IMR-90 (cell line): ENCODE measurements at regions of chr16 and their contacts with region 1.

Region 1: GRCh38 chr16:30445408-30446202 is at the start of gene SEPHS2:
- DNase-seq: peak; percentile 97
- ATAC-seq: peak; percentile 97
- H3K4me3 ChIP-seq: peak within 1 kb of the TSS; percentile 65
- H3K27ac ChIP-seq: peak within 1 kb of the TSS; percentile 61
- H3K4me1 ChIP-seq: peaks cover 5% of the 10 kb centered on the region
- H3K27me3 ChIP-seq: no peaks in the 10 kb centered on the region
- CTCF ChIP-seq: peak; percentile 57
- POLR2A ChIP-seq: peak; percentile 95
- RAD21 ChIP-seq: peak; percentile 35
- total RNA-seq, gene SEPHS2: 10.4 and 10.6 TPM in 2 replicates

Region 2: DNA sequence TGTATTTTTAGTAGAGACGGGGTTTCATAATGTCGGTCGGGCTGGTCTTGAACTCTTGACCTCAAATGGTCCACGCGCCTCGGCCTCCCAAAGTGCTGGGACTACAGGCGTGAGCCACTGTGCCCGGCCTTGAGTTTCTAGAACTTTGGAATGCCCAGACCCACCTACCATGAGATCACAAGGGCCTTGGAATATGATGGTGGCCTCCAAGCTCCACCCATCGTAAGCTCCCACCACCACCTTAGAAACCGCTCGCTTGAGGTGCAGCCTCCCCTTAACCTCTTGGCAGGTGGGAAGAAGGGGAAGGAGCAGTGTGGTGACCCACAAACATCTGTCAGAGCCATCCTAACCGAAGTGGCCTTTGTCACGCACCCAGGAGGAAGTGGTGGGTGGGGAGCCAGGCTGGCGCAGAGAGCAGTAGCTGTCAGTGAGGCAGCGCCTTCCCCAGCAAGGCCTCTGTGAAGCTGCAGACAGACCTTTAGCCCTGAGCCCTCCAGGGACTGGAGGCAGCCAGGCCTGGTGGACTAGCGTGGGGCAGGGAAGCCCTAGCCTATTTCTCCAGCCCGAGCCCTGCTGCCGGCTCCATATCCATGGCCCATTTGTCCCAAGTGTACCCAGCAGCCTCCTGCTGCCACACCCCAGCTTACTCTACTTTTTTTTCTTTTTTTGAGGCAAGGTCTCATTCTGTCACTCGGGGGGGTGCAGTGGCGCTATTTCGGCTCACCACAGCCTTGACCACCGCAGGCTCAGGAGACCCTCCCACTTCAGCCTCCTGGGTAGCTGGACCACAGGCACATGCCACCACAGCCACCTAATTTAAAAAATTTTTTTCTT is 13.2 kb after region 1 on chr16:
- CTCF ChIA-PET with region 1: no interaction called
- POLR2A ChIA-PET with region 1: no interaction called
- dilution Hi-C with region 1: no loop called
- in situ Hi-C with region 1: no loop called
- intact Hi-C with region 1: no loop called
- DNase-seq: no peak
- ATAC-seq: no peak
- H3K4me3 ChIP-seq: no peak overlapping the region
- H3K27ac ChIP-seq: no peak overlapping the region
- H3K4me1 ChIP-seq: no peaks in the 10 kb centered on the region
- H3K27me3 ChIP-seq: peaks cover 24% of the 10 kb centered on the region
- CTCF ChIP-seq: no peak
- POLR2A ChIP-seq: no peak
- RAD21 ChIP-seq: no peak

Region 3: GRCh38 chr16:30526823-30527635 is 81.4 kb after region 1 on chr16:
- CTCF ChIA-PET with region 1: no interaction called
- POLR2A ChIA-PET with region 1: no interaction called
- dilution Hi-C with region 1: no loop called
- in situ Hi-C with region 1: no loop called
- intact Hi-C with region 1: loop called (anchors 2 kb)
- DNase-seq: peak; percentile 96
- ATAC-seq: peak; percentile 91
- H3K4me3 ChIP-seq: peak overlapping the region; percentile 85
- H3K27ac ChIP-seq: peak overlapping the region; percentile 97
- H3K4me1 ChIP-seq: peaks cover 5% of the 10 kb centered on the region
- H3K27me3 ChIP-seq: no peaks in the 10 kb centered on the region
- CTCF ChIP-seq: peak; percentile 14; the same call in 1 of the 2 replicates
- POLR2A ChIP-seq: peak; percentile 43; the same call in 1 of the 2 replicates
- RAD21 ChIP-seq: 0 out of 2 replicates have a peak, but pooled peaks have one; percentile 22

Region 4: GRCh38 chr16:30571695-30572600 is 126.3 kb after region 1 on chr16 and contains the start of gene ZNF688:
- CTCF ChIA-PET with region 1: no interaction called
- POLR2A ChIA-PET with region 1: no interaction called
- dilution Hi-C with region 1: no loop called
- in situ Hi-C with region 1: no loop called
- intact Hi-C with region 1: loop called (anchors 1 kb)
- DNase-seq: peak; percentile 96
- ATAC-seq: peak; percentile 90
- H3K4me3 ChIP-seq: peak within 1 kb of the TSS; percentile 57
- H3K27ac ChIP-seq: peak within 1 kb of the TSS; percentile 89
- H3K4me1 ChIP-seq: peaks cover 9% of the 10 kb centered on the region
- H3K27me3 ChIP-seq: no peaks in the 10 kb centered on the region
- CTCF ChIP-seq: no peak
- POLR2A ChIP-seq: no peak
- RAD21 ChIP-seq: no peak
- total RNA-seq, gene ZNF688: 1.7 and 1.8 TPM in 2 replicates

Region 5: GRCh38 chr16:30602616-30603277 is 157.1 kb after region 1 on chr16:
- CTCF ChIA-PET with region 1: no interaction called
- POLR2A ChIA-PET with region 1: no interaction called
- dilution Hi-C with region 1: no loop called
- in situ Hi-C with region 1: loop called (anchors 5 kb)
- intact Hi-C with region 1: loop called (anchors 1 kb)
- DNase-seq: peak; percentile 37
- ATAC-seq: peak; percentile 46
- H3K4me3 ChIP-seq: no peak overlapping the region
- H3K27ac ChIP-seq: no peak overlapping the region; the same call in 1 of the 2 replicates
- H3K4me1 ChIP-seq: peaks cover 6% of the 10 kb centered on the region; the same call in 1 of the 2 replicates
- H3K27me3 ChIP-seq: no peaks in the 10 kb centered on the region
- CTCF ChIP-seq: no peak
- POLR2A ChIP-seq: no peak
- RAD21 ChIP-seq: no peak

Region 6: GRCh38 chr16:30628627-30629540 is 183.3 kb after region 1 on chr16:
- CTCF ChIA-PET with region 1: interaction called, 3 read pairs
- POLR2A ChIA-PET with region 1: no interaction called
- dilution Hi-C with region 1: no loop called
- in situ Hi-C with region 1: loop called (anchors 5 kb)
- intact Hi-C with region 1: loop called (anchors 1 kb)
- DNase-seq: peak; percentile 68
- ATAC-seq: peak; percentile 99
- H3K4me3 ChIP-seq: no peak overlapping the region
- H3K27ac ChIP-seq: no peak overlapping the region
- H3K4me1 ChIP-seq: no peaks in the 10 kb centered on the region
- H3K27me3 ChIP-seq: no peaks in the 10 kb centered on the region
- CTCF ChIP-seq: peak; percentile 88
- POLR2A ChIP-seq: no peak
- RAD21 ChIP-seq: peak; percentile 83

Region 7: DNA sequence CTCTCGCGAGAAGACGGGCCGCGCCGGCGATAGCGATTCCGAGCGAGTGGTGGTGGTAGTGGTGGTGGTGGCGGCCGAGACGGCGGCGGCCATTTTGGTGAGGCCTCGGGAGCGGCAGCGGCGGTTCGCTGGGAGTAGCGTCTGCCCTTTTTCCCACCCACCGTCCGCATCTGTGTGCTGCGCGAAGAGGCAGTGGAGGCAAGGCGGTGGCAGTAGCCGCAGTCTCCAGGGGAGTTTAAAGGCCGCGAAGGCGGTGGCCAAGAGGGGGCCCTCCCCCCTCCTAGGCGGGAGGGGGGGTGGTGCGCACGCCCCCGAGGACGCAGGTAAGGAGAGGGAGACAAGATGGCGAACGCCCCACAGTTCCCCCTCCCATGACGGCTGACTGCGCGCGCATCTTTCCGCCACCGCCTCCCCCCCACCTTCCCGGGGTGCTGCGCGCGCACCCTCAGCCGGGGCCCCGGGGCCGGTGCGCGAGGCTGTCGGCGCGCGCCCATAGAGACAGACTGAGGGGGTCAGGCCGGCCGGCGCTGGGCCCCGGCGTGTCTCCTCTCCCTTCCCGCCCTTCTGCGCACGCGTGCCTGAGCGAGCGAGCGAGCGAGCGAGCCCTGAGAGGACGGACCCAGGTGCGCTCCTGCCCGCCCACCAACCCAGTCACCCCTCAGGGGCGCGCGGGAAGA is 252.7 kb after region 1 on chr16:
- CTCF ChIA-PET with region 1: no interaction called
- POLR2A ChIA-PET with region 1: no interaction called
- dilution Hi-C with region 1: no loop called
- in situ Hi-C with region 1: no loop called
- intact Hi-C with region 1: loop called (anchors 1 kb)
- DNase-seq: peak; percentile 87
- ATAC-seq: peak; percentile 83
- H3K4me3 ChIP-seq: peak overlapping the region; percentile 85
- H3K27ac ChIP-seq: peak overlapping the region; percentile 99
- H3K4me1 ChIP-seq: peaks cover 8% of the 10 kb centered on the region
- H3K27me3 ChIP-seq: no peaks in the 10 kb centered on the region
- CTCF ChIP-seq: no peak
- POLR2A ChIP-seq: peak; percentile 95
- RAD21 ChIP-seq: no peak